GM12878 (cell line): ENCODE measurements at regions of chr1 and their contacts with region 1.

Region 1: DNA sequence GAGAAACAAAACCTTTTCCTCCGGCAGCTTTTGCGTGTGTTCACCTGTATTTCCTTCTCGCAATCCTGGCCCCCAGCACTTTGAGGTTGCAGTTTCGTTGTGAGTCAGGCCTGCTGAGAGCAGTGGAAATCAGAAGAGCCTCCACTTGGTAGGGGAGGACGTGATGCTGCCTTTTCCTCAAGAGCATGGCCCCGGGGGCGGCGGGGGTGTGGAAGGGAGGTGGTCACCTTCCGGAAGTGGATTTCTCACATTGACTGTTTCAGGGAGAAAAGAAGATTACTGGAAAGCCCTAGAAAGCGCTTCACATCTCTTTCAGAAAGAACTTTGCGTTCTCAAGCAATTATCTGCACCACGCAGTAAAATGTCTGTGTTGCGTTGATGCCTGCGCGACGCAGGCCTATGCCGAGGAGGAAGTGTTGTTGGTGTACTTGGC is 12.2 kb upstream of the IL10 start:
- DNase-seq: no peak
- ATAC-seq: peak; percentile 81
- H3K4me3 ChIP-seq: peak overlapping the region; percentile 38; the same call in 1 of the 2 replicates
- H3K27ac ChIP-seq: peak overlapping the region; percentile 85
- H3K4me1 ChIP-seq: peaks cover 49% of the 10 kb centered on the region
- H3K27me3 ChIP-seq: no peaks in the 10 kb centered on the region
- CTCF ChIP-seq: no peak
- EP300 ChIP-seq: peak; percentile 69 to 89; a peak in 3 of 4 replicates
- POLR2A ChIP-seq: peak; percentile 55
- RAD21 ChIP-seq: peak; percentile 19; the same call in 1 of the 2 replicates

Region 2: GRCh38 chr1:206050655-206051235 is 733.7 kb before region 1 on chr1:
- CTCF ChIA-PET with region 1: no interaction called
- POLR2A ChIA-PET with region 1: no interaction called
- RAD21 ChIA-PET with region 1: no interaction called
- SMC1A ChIA-PET with region 1: no interaction called
- in situ Hi-C with region 1: loop called (anchors 10 kb)
- intact Hi-C with region 1: no loop called
- DNase-seq: peak; percentile 100
- ATAC-seq: peak; percentile 88
- H3K4me3 ChIP-seq: no peak overlapping the region
- H3K27ac ChIP-seq: peak overlapping the region; percentile 91
- H3K4me1 ChIP-seq: peaks cover 53% of the 10 kb centered on the region
- H3K27me3 ChIP-seq: no peaks in the 10 kb centered on the region
- CTCF ChIP-seq: 0 out of 6 replicates have a peak, but pooled peaks of 1 of the 3 experiments have one; percentile 3
- EP300 ChIP-seq: peak; percentile 97 to 98
- POLR2A ChIP-seq: peak; percentile 69
- RAD21 ChIP-seq: 0 out of 2 replicates have a peak, but pooled peaks have one; percentile 15

Region 3: DNA sequence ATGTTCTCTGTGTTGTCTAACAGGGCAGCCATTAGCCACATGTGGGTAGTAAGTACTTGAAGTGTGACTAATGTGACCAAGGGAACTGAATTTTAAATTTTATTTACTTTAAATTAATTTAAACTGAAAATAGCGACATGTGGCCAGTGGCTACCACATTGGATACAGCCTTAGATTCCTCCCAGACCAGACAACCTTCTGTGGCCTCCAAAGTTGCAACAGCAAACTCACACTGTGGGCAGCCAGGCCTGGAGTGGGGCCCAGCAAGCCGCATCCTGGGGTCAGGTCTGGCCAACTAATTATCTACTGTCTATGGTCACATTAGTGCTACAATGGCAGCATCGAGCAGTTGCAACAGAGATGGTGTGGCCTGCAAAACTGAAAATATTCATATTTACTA is 184.0 kb before region 1 on chr1:
- CTCF ChIA-PET with region 1: no interaction called
- POLR2A ChIA-PET with region 1: no interaction called
- RAD21 ChIA-PET with region 1: no interaction called
- SMC1A ChIA-PET with region 1: no interaction called
- in situ Hi-C with region 1: no loop called
- intact Hi-C with region 1: no loop called
- DNase-seq: no peak
- ATAC-seq: no peak
- H3K4me3 ChIP-seq: no peak overlapping the region
- H3K27ac ChIP-seq: no peak overlapping the region
- H3K4me1 ChIP-seq: no peaks in the 10 kb centered on the region
- H3K27me3 ChIP-seq: no peaks in the 10 kb centered on the region
- CTCF ChIP-seq: no peak
- EP300 ChIP-seq: no peak
- POLR2A ChIP-seq: no peak
- RAD21 ChIP-seq: no peak

Region 4: DNA sequence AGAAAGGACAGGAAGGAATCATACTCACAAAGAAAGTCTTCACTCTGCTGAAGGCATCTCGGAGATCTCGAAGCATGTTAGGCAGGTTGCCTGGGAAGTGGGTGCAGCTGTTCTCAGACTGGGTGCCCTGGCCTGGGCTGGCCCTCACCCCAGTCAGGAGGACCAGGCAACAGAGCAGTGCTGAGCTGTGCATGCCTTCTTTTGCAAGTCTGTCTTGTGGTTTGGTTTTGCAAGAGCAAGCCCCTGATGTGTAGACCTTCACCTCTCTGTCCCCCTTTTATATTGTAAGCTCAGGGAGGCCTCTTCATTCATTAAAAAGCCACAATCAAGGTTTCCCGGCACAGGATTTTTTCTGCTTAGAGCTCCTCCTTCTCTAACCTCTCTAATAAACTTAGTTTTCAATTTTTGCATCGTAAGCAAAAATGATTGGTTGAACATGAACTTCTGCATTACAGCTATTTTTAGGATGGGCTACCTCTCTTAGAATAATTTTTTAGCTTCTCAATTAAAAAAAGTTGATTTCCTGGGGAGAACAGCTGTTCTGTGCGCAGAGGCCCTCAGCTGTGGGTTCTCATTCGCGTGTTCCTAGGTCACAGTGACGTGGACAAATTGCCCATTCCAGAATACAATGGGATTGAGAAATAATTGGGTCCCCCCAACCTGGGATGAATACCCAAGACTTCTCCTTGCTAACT is 12.1 kb before region 1 on chr1 and contains the start of gene IL10:
- CTCF ChIA-PET with region 1: interaction called, 221 read pairs
- POLR2A ChIA-PET with region 1: interaction called, 283 read pairs
- RAD21 ChIA-PET with region 1: interaction called, 363 read pairs
- SMC1A ChIA-PET with region 1: interaction called, 410 read pairs
- in situ Hi-C with region 1: no loop called
- intact Hi-C with region 1: loop called (anchors 1 kb)
- DNase-seq: no peak
- ATAC-seq: no peak
- H3K4me3 ChIP-seq: peak within 1 kb of the TSS; percentile 74
- H3K27ac ChIP-seq: peak within 1 kb of the TSS; percentile 86
- H3K4me1 ChIP-seq: peaks cover 70% of the 10 kb centered on the region
- H3K27me3 ChIP-seq: no peaks in the 10 kb centered on the region
- CTCF ChIP-seq: no peak
- EP300 ChIP-seq: no peak
- POLR2A ChIP-seq: peak; percentile 46; the same call in 1 of the 2 replicates
- RAD21 ChIP-seq: no peak
- polyA plus RNA-seq, gene IL10: 1.2 to 1.6 TPM

Region 5: GRCh38 chr1:206797534-206798383 is 13.3 kb after region 1 on chr1:
- CTCF ChIA-PET with region 1: interaction called, 25 read pairs
- POLR2A ChIA-PET with region 1: interaction called, 8 read pairs
- RAD21 ChIA-PET with region 1: interaction called, 30 read pairs
- SMC1A ChIA-PET with region 1: interaction called, 29 read pairs
- in situ Hi-C with region 1: no loop called
- intact Hi-C with region 1: no loop called
- DNase-seq: no peak
- ATAC-seq: peak; percentile 31; the same call in 2 of the 3 replicates
- H3K4me3 ChIP-seq: no peak overlapping the region
- H3K27ac ChIP-seq: no peak overlapping the region
- H3K4me1 ChIP-seq: peaks cover 28% of the 10 kb centered on the region
- H3K27me3 ChIP-seq: no peaks in the 10 kb centered on the region
- CTCF ChIP-seq: peak; percentile 44 to 78 (median 73)
- EP300 ChIP-seq: no peak
- POLR2A ChIP-seq: no peak
- RAD21 ChIP-seq: peak; percentile 41